SK-N-SH (cell line): ENCODE measurements at regions of chr20 and their contacts with region 1.

Region 1: GRCh38 chr20:47205577-47206498 is 150.7 kb downstream of the ZMYND8 start:
- DNase-seq: peak; percentile 78
- H3K4me3 ChIP-seq: no peak overlapping the region
- H3K27ac ChIP-seq: no peak overlapping the region; a peak in 1 of 4 replicates
- H3K4me1 ChIP-seq: peaks cover 0 to 3% of the 10 kb centered on the region in 2 experiments; a peak in 1 of 4 replicates
- H3K27me3 ChIP-seq: no peaks in the 10 kb centered on the region
- CTCF ChIP-seq: peak; percentile 78
- EP300 ChIP-seq: no peak
- RAD21 ChIP-seq: peak; percentile 74

Region 2: DNA sequence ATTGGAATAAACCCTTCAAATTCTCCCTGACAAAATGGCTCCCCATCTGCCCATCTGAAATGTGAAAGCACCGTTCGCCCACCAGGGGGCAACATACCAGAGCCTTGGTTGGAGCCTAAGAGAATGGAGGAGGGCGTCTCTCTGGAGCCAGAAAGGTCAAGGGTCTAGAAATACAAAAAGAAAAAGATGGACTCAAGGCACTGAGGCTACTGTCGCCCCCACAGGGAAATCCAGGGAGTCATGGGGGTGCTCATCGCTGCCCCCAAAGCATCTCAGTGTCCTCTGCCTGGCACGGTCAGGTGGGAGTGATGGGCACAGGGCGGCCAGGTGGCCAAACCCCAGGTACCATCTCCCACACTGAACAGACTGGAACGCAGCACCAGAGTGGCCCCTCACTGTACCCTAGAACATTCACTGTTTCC is 14.3 kb after region 1 on chr20:
- CTCF ChIA-PET with region 1: interaction called, 28 read pairs
- POLR2A ChIA-PET with region 1: no interaction called
- DNase-seq: peak; percentile 61
- H3K4me3 ChIP-seq: no peak overlapping the region; a peak in 1 of 4 replicates
- H3K27ac ChIP-seq: no peak overlapping the region
- H3K4me1 ChIP-seq: no peaks in the 10 kb centered on the region
- H3K27me3 ChIP-seq: no peaks in the 10 kb centered on the region
- CTCF ChIP-seq: peak; percentile 74
- EP300 ChIP-seq: no peak
- RAD21 ChIP-seq: peak; percentile 46

Region 3: GRCh38 chr20:47228654-47229053 is 22.8 kb after region 1 on chr20:
- CTCF ChIA-PET with region 1: interaction called, 13 read pairs
- POLR2A ChIA-PET with region 1: no interaction called
- DNase-seq: no peak
- H3K4me3 ChIP-seq: no peak overlapping the region
- H3K27ac ChIP-seq: no peak overlapping the region
- H3K4me1 ChIP-seq: peaks cover 8 to 16% of the 10 kb centered on the region in 2 experiments; a peak in 3 of 4 replicates
- H3K27me3 ChIP-seq: no peaks in the 10 kb centered on the region
- CTCF ChIP-seq: no peak
- EP300 ChIP-seq: no peak
- RAD21 ChIP-seq: no peak

Region 4: DNA sequence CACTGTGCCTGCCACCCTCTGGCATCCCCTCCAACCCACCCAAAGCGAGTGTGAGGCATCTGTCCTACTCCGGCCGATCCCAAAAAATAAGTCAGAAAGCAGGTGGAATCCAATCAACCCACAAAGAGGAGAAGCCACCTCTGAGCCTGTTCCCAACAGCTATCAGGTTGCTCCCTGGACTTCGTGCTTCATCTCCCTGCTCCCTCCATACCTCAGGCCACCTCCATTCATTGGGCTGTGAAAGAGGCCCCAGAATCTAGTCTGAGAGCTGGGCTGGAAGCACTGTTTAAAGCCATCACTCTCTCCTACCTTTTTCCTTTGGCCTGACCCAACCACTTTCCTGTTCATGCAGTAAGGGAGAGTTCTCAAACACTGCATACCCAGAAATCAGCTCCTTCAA is 44.5 kb after region 1 on chr20:
- CTCF ChIA-PET with region 1: interaction called, 10 read pairs
- POLR2A ChIA-PET with region 1: no interaction called
- DNase-seq: no peak
- H3K4me3 ChIP-seq: no peak overlapping the region
- H3K27ac ChIP-seq: no peak overlapping the region
- H3K4me1 ChIP-seq: peaks cover 0 to 8% of the 10 kb centered on the region in 2 experiments; a peak in 1 of 4 replicates
- H3K27me3 ChIP-seq: no peaks in the 10 kb centered on the region
- CTCF ChIP-seq: no peak
- EP300 ChIP-seq: no peak
- RAD21 ChIP-seq: no peak